HepG2 (cell line): ENCODE measurements at regions of chr1 and their contacts with region 1.

Region 1: DNA sequence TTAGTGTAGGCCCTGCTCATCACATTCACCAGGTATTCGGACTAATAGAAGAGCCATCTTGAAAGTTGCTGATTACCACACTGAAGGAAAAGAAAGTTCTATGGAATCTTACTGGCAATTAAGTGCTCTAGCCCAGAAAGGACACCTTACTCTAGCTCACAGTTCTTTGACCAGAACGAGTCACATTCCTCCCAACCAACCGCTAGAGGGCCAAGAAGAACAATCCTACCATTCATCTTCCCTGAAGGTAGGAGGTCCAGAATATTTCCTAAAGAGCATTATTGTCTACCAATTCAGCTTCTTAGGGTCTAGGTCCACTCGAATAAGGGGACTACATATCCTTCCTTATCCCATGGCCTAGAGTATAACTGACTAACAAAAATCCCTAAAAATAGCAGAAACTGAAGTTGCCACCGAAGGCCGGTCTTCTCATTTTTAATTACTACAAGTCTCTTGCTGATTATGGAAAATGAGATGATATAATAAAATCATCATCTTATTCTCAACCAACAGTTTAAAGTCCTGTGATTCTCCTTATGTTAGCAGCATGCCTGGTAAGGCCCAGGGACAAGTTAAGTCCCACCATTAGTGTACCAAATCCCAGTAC is 2.7 kb upstream of the FMO1 start:
- DNase-seq: peak; percentile 25
- ATAC-seq: peak; percentile 92
- H3K4me3 ChIP-seq: no peak overlapping the region
- H3K27ac ChIP-seq: no peak overlapping the region
- H3K4me1 ChIP-seq: no peaks in the 10 kb centered on the region
- H3K27me3 ChIP-seq: peaks cover 0 to 8% of the 10 kb centered on the region in 2 experiments; a peak in 2 of 5 replicates
- CTCF ChIP-seq: peak; percentile 71
- EP300 ChIP-seq: no peak
- POLR2A ChIP-seq: no peak
- RAD21 ChIP-seq: no peak

Region 2: DNA sequence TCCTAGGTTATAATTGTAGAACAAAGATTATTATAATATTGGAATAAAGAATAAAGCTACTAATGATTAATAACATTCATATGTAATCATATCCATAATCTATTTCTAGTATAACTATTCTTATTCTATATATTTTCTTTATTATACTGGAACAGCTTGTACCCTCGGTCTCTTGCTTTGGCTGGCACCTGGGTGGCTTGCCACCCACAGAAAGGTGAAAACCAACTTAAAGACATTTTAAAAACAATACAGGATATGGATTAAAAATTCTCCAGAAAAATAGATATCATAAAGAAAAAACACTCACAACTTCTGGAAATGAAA is 159.8 kb after region 1 on chr1:
- CTCF ChIA-PET with region 1: no interaction called
- POLR2A ChIA-PET with region 1: no interaction called
- in situ Hi-C with region 1: no loop called
- intact Hi-C with region 1: loop called (anchors 1 kb)
- DNase-seq: no peak
- ATAC-seq: no peak
- H3K4me3 ChIP-seq: no peak overlapping the region
- H3K27ac ChIP-seq: no peak overlapping the region
- H3K4me1 ChIP-seq: no peaks in the 10 kb centered on the region
- H3K27me3 ChIP-seq: no peaks in the 10 kb centered on the region
- CTCF ChIP-seq: no peak
- EP300 ChIP-seq: no peak
- POLR2A ChIP-seq: no peak
- RAD21 ChIP-seq: no peak